ENCODE measurements at regions of chr7 and their contacts with region 1.

Region 1: DNA sequence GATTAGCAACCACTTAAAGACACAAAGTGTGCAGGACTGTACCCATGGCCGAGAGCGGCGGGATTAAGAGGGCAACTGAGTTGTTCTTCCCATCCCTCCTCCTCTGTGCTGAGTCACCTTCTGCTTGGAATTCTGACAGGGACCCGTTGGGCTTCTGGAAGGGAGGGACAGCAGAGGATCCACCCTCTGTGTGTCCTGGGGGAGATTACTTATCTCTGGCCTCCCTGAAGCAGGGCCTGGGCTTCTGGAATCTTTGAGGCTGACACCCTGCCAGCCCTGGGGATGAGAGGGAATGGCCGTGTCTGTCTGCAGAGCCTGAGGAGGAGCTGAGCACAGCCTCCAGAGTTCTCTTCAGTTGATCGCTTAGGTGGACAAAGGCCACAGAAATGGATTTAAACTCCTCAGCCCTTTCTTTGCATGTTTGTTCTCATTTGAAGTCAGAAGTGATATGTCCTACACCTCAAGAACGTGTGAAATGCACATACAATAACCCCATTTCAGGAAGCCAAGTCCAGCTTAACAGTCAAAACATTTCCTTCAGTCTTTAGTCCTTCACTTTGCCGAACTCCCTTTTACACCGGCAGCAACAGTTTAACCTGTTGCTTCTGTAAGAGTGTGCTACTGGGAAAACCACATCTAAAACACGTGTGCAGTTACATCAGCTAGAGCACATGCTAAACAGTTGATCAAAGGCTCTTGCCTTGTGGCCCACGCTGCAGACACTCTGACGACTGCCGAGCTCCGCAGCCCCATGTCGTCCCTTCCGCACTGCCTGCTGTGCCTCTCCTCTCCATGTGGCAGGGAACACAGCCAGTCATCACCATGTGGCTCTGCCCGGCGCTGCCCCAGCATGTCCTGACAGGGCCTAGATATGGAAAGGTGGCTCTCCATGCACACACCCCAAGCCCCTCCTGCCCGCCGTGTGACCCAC is 55.7 kb downstream of the IKZF1 start:
- DNase-seq: peak; percentile 72 to 91 (median 87)
- H3K4me3 ChIP-seq: peak overlapping the region; percentile 14
- H3K4me3 Mint-ChIP-seq: peak overlapping the region; percentile 60 to 85 (median 76)
- H3K27ac ChIP-seq: peak overlapping the region; percentile 71
- H3K27ac Mint-ChIP-seq: peak overlapping the region in 7 of 8 donors; percentile 97 to 100 (median 100)
- H3K4me1 ChIP-seq: peaks cover 98% of the 10 kb centered on the region
- H3K4me1 Mint-ChIP-seq: peaks cover 93 to 99% (median 98%) of the 10 kb centered on the region in 3 donors
- H3K27me3 ChIP-seq: no peaks in the 10 kb centered on the region
- H3K27me3 Mint-ChIP-seq: no peaks in the 10 kb centered on the region

Region 2: GRCh38 chr7:50317221-50317678 is 43.0 kb before region 1 on chr7:
- CTCF ChIA-PET with region 1: interaction called, 815 read pairs
- POLR2A ChIA-PET with region 1: interaction called, 29 read pairs
- DNase-seq: peak in 3 of 5 donors; percentile 74 to 85 (median 74)
- H3K4me3 ChIP-seq: peak overlapping the region; percentile 57
- H3K4me3 Mint-ChIP-seq: peak overlapping the region; percentile 79 to 100 (median 98)
- H3K27ac ChIP-seq: peak overlapping the region; percentile 66
- H3K27ac Mint-ChIP-seq: peak overlapping the region; percentile 92 to 99 (median 98)
- H3K4me1 ChIP-seq: peaks cover 98% of the 10 kb centered on the region
- H3K4me1 Mint-ChIP-seq: peaks cover 95 to 100% (median 99%) of the 10 kb centered on the region in 3 donors
- H3K27me3 ChIP-seq: no peaks in the 10 kb centered on the region
- H3K27me3 Mint-ChIP-seq: no peaks in the 10 kb centered on the region

Region 3: GRCh38 chr7:50335795-50336754 is 24.2 kb before region 1 on chr7:
- CTCF ChIA-PET with region 1: interaction called, 33 read pairs
- POLR2A ChIA-PET with region 1: interaction called, 136 read pairs
- DNase-seq: peak; percentile 71 to 93 (median 77)
- H3K4me3 ChIP-seq: peak overlapping the region; percentile 32
- H3K4me3 Mint-ChIP-seq: no peak overlapping the region
- H3K27ac ChIP-seq: peak overlapping the region; percentile 49
- H3K27ac Mint-ChIP-seq: no peak overlapping the region
- H3K4me1 ChIP-seq: peaks cover 100% of the 10 kb centered on the region
- H3K4me1 Mint-ChIP-seq: peaks cover 0 to under 1% (median 0%) of the 10 kb centered on the region in 3 donors
- H3K27me3 ChIP-seq: no peaks in the 10 kb centered on the region
- H3K27me3 Mint-ChIP-seq: no peaks in the 10 kb centered on the region

Region 4: GRCh38 chr7:50342616-50343114 is 17.6 kb before region 1 on chr7:
- CTCF ChIA-PET with region 1: interaction called, 33 read pairs
- POLR2A ChIA-PET with region 1: interaction called, 136 read pairs
- DNase-seq: peak; percentile 61 to 80 (median 73)
- H3K4me3 ChIP-seq: peak overlapping the region; percentile 13
- H3K4me3 Mint-ChIP-seq: peak overlapping the region; percentile 55 to 85 (median 79)
- H3K27ac ChIP-seq: no peak overlapping the region
- H3K27ac Mint-ChIP-seq: peak overlapping the region in 5 of 8 donors; percentile 84 to 99 (median 96)
- H3K4me1 ChIP-seq: peaks cover 98% of the 10 kb centered on the region
- H3K4me1 Mint-ChIP-seq: peaks cover 28 to 67% (median 61%) of the 10 kb centered on the region in 3 donors
- H3K27me3 ChIP-seq: no peaks in the 10 kb centered on the region
- H3K27me3 Mint-ChIP-seq: peaks cover 0 to 2% of the 10 kb centered on the region in 2 donors

Region 5: GRCh38 chr7:50349963-50350944 is 10.0 kb before region 1 on chr7:
- CTCF ChIA-PET with region 1: interaction called, 16 read pairs
- POLR2A ChIA-PET with region 1: interaction called, 42 read pairs
- DNase-seq: peak in 4 of 5 donors; percentile 46 to 80 (median 58)
- H3K4me3 ChIP-seq: peak overlapping the region; percentile 44
- H3K4me3 Mint-ChIP-seq: peak overlapping the region; percentile 59 to 90 (median 68)
- H3K27ac ChIP-seq: peak overlapping the region; percentile 73
- H3K27ac Mint-ChIP-seq: peak overlapping the region in 7 of 8 donors; percentile 92 to 100 (median 96)
- H3K4me1 ChIP-seq: peaks cover 97% of the 10 kb centered on the region
- H3K4me1 Mint-ChIP-seq: peaks cover 97 to 100% (median 100%) of the 10 kb centered on the region in 3 donors
- H3K27me3 ChIP-seq: no peaks in the 10 kb centered on the region
- H3K27me3 Mint-ChIP-seq: no peaks in the 10 kb centered on the region

Region 6: DNA sequence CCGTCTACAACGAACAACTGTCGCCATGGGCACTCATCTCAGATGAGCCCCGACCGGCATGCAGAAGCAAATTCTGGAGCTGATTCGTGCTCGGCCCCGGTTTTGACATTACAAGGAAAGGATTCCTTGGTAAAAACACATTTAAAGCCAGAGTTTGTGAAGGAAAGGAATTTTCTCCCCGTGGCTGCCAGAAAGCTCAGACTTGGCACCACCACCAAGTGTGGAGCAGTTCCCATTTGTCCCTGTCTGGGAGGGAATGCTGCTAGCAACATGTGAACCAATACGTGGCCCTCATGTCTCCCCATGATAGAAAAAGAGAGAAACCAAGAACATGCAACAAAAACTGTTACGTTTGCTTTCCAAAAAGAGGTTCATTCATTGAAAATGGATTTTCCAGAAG is 260.2 kb after region 1 on chr7:
- CTCF ChIA-PET with region 1: no interaction called
- POLR2A ChIA-PET with region 1: no interaction called
- DNase-seq: no peak
- H3K4me3 ChIP-seq: no peak overlapping the region
- H3K4me3 Mint-ChIP-seq: no peak overlapping the region
- H3K27ac ChIP-seq: no peak overlapping the region
- H3K27ac Mint-ChIP-seq: no peak overlapping the region
- H3K4me1 ChIP-seq: no peaks in the 10 kb centered on the region
- H3K4me1 Mint-ChIP-seq: no peaks in the 10 kb centered on the region
- H3K27me3 ChIP-seq: no peaks in the 10 kb centered on the region
- H3K27me3 Mint-ChIP-seq: peaks cover 9 to 34% of the 10 kb centered on the region in 2 donors

Measured in CD8-positive, alpha-beta memory T cell (primary cell).